ENCODE measurements at regions of chr22 and their contacts with region 1.

Region 1: GRCh38 chr22:40645579-40646197 is 9.2 kb upstream of the MRTFA start:
- DNase-seq: no peak
- ATAC-seq: no peak
- H3K4me3 ChIP-seq: no peak overlapping the region
- H3K27ac ChIP-seq: no peak overlapping the region
- H3K4me1 ChIP-seq: peaks cover 18% of the 10 kb centered on the region
- H3K27me3 ChIP-seq: no peaks in the 10 kb centered on the region
- CTCF ChIP-seq: no peak

Region 2: GRCh38 chr22:40436505-40437451 is 208.9 kb before region 1 on chr22:
- CTCF ChIA-PET with region 1: interaction called, 4 read pairs
- POLR2A ChIA-PET with region 1: interaction called, 4 read pairs
- intact Hi-C with region 1: loop called (anchors 1 kb)
- DNase-seq: peak; percentile 66
- ATAC-seq: peak; percentile 54
- H3K4me3 ChIP-seq: no peak overlapping the region
- H3K27ac ChIP-seq: no peak overlapping the region
- H3K4me1 ChIP-seq: no peaks in the 10 kb centered on the region; the same call in 1 of the 2 replicates
- H3K27me3 ChIP-seq: no peaks in the 10 kb centered on the region
- CTCF ChIP-seq: peak; percentile 67

Region 3: DNA sequence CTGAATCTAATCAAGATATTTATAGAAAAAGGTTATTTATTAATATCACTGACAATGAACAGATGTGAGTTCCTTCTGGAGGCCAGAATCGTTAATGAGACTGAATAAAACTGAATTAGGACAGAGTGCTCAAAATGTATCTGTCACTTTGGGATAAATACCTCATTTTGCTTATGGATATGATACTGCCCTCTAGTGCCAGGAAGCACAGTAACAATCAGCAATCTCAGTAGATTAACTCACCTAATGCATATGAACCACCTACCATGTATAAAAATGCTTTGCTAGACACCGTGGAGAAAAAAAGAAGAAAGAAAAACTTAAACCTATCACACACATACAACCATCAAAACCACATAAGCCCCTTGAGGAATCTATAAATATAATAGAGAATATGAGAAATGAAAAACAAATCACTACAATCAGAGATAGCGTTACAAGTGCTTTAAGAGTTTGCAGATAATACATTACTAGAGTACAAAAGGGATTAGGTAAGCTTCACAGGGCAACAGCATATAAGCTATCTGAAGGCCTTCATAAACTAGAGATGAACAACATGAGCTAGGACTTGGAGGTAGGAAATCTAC is 157.9 kb before region 1 on chr22:
- CTCF ChIA-PET with region 1: no interaction called
- POLR2A ChIA-PET with region 1: no interaction called
- intact Hi-C with region 1: loop called (anchors 1 kb)
- DNase-seq: peak; percentile 41
- ATAC-seq: peak; percentile 48; the same call in 1 of the 2 replicates
- H3K4me3 ChIP-seq: no peak overlapping the region
- H3K27ac ChIP-seq: no peak overlapping the region
- H3K4me1 ChIP-seq: no peaks in the 10 kb centered on the region; the same call in 1 of the 2 replicates
- H3K27me3 ChIP-seq: no peaks in the 10 kb centered on the region
- CTCF ChIP-seq: peak; percentile 81

Region 4: GRCh38 chr22:40525249-40525884 is 120.3 kb before region 1 on chr22:
- CTCF ChIA-PET with region 1: interaction called, 7 read pairs
- POLR2A ChIA-PET with region 1: no interaction called
- intact Hi-C with region 1: loop called (anchors 2 kb)
- DNase-seq: peak; percentile 48
- ATAC-seq: peak; percentile 55
- H3K4me3 ChIP-seq: no peak overlapping the region
- H3K27ac ChIP-seq: no peak overlapping the region
- H3K4me1 ChIP-seq: peaks cover 29% of the 10 kb centered on the region
- H3K27me3 ChIP-seq: no peaks in the 10 kb centered on the region
- CTCF ChIP-seq: peak; percentile 65

Region 5: GRCh38 chr22:40726514-40726913 is 80.8 kb after region 1 on chr22:
- CTCF ChIA-PET with region 1: no interaction called
- POLR2A ChIA-PET with region 1: no interaction called
- intact Hi-C with region 1: no loop called
- DNase-seq: no peak
- ATAC-seq: no peak
- H3K4me3 ChIP-seq: no peak overlapping the region
- H3K27ac ChIP-seq: no peak overlapping the region
- H3K4me1 ChIP-seq: no peaks in the 10 kb centered on the region; the same call in 1 of the 2 replicates
- H3K27me3 ChIP-seq: no peaks in the 10 kb centered on the region
- CTCF ChIP-seq: no peak